CD4-positive, alpha-beta memory T cell (primary cell): ENCODE measurements at regions of chr1 and their contacts with region 1.

Region 1: GRCh38 chr1:172398970-172399755 is 21.3 kb upstream of the C1orf105 start:
- DNase-seq: peak in 4 of 5 donors; percentile 43 to 55 (median 49)
- H3K4me3 ChIP-seq: peak overlapping the region in 1 of 2 donors; percentile 20
- H3K4me3 Mint-ChIP-seq: peak overlapping the region; percentile 21 to 80 (median 70)
- H3K27ac ChIP-seq: no peak overlapping the region
- H3K27ac Mint-ChIP-seq: peak overlapping the region; percentile 64 to 82 (median 77)
- H3K4me1 ChIP-seq: peaks cover 44% of the 10 kb centered on the region
- H3K4me1 Mint-ChIP-seq: peaks cover 32 to 68% (median 53%) of the 10 kb centered on the region in 4 donors
- H3K27me3 ChIP-seq: no peaks in the 10 kb centered on the region
- H3K27me3 Mint-ChIP-seq: no peaks in the 10 kb centered on the region

Region 2: GRCh38 chr1:171801487-171801891 is 597.7 kb before region 1 on chr1:
- CTCF ChIA-PET with region 1: interaction called, 4 read pairs
- POLR2A ChIA-PET with region 1: no interaction called
- intact Hi-C with region 1: loop called (anchors 1 kb)
- DNase-seq: peak in 2 of 5 donors; percentile 20 to 23
- H3K4me3 ChIP-seq: no peak overlapping the region
- H3K4me3 Mint-ChIP-seq: no peak overlapping the region
- H3K27ac ChIP-seq: no peak overlapping the region
- H3K27ac Mint-ChIP-seq: peak overlapping the region in 1 of 7 donors; percentile 7
- H3K4me1 ChIP-seq: no peaks in the 10 kb centered on the region
- H3K4me1 Mint-ChIP-seq: peaks cover 3 to 8% (median 6%) of the 10 kb centered on the region in 4 donors
- H3K27me3 ChIP-seq: no peaks in the 10 kb centered on the region
- H3K27me3 Mint-ChIP-seq: no peaks in the 10 kb centered on the region

Region 3: GRCh38 chr1:172089768-172090510 is 309.2 kb before region 1 on chr1:
- CTCF ChIA-PET with region 1: interaction called, 57 read pairs
- POLR2A ChIA-PET with region 1: interaction called, 3 read pairs
- intact Hi-C with region 1: loop called (anchors 1 kb)
- DNase-seq: peak; percentile 42 to 57 (median 49)
- H3K4me3 ChIP-seq: no peak overlapping the region
- H3K4me3 Mint-ChIP-seq: peak overlapping the region in 1 of 8 donors; percentile 18
- H3K27ac ChIP-seq: no peak overlapping the region
- H3K27ac Mint-ChIP-seq: peak overlapping the region in 1 of 7 donors; percentile 73
- H3K4me1 ChIP-seq: no peaks in the 10 kb centered on the region
- H3K4me1 Mint-ChIP-seq: peaks cover 3 to 6% (median 4%) of the 10 kb centered on the region in 4 donors
- H3K27me3 ChIP-seq: no peaks in the 10 kb centered on the region
- H3K27me3 Mint-ChIP-seq: peaks cover 0 to 2% of the 10 kb centered on the region in 2 donors

Region 4: GRCh38 chr1:172180501-172181285 is 218.5 kb before region 1 on chr1:
- CTCF ChIA-PET with region 1: interaction called, 15 read pairs
- POLR2A ChIA-PET with region 1: interaction called, 32 read pairs
- intact Hi-C with region 1: loop called (anchors 1 kb)
- DNase-seq: peak; percentile 46 to 58 (median 55)
- H3K4me3 ChIP-seq: peak overlapping the region; percentile 23 to 36
- H3K4me3 Mint-ChIP-seq: peak overlapping the region; percentile 75 to 92 (median 86)
- H3K27ac ChIP-seq: peak overlapping the region; percentile 75
- H3K27ac Mint-ChIP-seq: peak overlapping the region; percentile 94 to 99 (median 97)
- H3K4me1 ChIP-seq: peaks cover 44% of the 10 kb centered on the region
- H3K4me1 Mint-ChIP-seq: peaks cover 25 to 61% (median 48%) of the 10 kb centered on the region in 4 donors
- H3K27me3 ChIP-seq: no peaks in the 10 kb centered on the region
- H3K27me3 Mint-ChIP-seq: no peaks in the 10 kb centered on the region

Region 5: DNA sequence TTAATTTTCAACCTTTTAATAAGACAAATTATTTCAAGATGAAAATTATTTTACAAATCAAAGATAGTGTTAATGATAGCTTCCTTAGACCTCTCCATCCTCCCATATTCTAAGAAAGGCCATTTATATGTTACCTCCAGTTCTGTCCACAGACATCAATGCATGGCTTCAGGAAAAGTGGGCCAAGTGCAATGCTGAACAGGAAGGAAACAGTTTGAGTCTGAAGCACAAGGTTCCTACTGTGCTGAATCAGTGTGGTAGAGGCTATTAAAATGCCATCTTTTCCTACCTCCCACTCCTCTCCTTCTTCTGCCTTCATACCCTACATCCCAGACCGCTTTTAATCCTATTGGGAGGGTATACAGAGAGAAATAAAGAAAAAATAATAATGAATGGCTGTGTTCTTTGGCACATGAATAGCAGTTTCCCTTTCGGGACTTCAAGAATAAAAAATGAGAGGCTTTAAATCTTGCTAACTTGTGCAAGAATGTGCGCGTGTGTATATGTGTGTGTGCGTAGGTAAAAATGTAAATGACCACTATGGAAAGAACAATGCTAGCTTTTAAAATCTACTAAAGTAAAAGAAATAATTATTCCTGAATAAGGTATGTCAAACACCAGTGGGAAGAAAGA is 41.3 kb before region 1 on chr1:
- CTCF ChIA-PET with region 1: interaction called, 26 read pairs
- POLR2A ChIA-PET with region 1: interaction called, 61 read pairs
- intact Hi-C with region 1: loop called (anchors 1 kb)
- DNase-seq: no peak
- H3K4me3 ChIP-seq: no peak overlapping the region
- H3K4me3 Mint-ChIP-seq: peak overlapping the region; percentile 62 to 84 (median 74)
- H3K27ac ChIP-seq: peak overlapping the region; percentile 56
- H3K27ac Mint-ChIP-seq: peak overlapping the region in 6 of 7 donors; percentile 73 to 95 (median 90)
- H3K4me1 ChIP-seq: peaks cover 66% of the 10 kb centered on the region
- H3K4me1 Mint-ChIP-seq: peaks cover 22 to 58% (median 46%) of the 10 kb centered on the region in 4 donors
- H3K27me3 ChIP-seq: no peaks in the 10 kb centered on the region
- H3K27me3 Mint-ChIP-seq: no peaks in the 10 kb centered on the region

Region 6: DNA sequence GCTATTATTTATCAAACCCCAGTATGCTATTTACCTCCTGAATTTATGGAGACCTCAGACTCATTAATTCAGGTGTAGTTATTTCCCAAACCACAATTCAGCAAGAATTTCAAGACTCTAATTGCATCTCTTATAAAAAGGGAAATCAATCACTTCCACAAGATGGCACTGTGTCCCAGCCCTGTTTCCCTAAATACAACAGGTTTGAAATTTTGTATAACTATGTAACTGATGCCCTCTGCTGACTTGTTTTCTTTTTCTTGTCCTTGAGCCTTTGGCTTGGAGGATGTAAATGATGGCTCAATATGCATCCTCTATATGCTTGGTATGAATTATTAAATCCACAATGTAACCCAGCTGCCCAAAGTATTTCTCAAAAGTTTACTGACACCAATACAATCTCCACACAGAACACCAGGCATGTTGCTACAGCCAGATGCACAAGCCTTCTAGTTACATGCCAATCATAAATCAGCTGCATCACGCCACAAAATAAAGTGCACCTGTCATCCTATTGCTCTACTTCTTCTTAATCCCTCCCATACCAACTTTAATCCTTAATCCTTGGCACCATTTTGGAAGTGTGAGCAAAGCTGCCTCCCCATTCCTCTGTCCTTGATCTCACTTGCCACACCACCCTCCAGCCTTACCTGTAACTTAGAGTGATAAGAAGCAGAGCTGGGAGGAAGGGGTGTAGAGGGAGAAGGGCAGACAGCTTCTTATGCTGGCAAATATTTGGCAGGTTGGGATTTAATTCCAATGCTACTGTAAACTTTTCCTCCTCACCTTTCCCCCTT is 30.4 kb after region 1 on chr1:
- CTCF ChIA-PET with region 1: interaction called, 8 read pairs
- POLR2A ChIA-PET with region 1: interaction called, 7 read pairs
- intact Hi-C with region 1: loop called (anchors 1 kb)
- DNase-seq: peak; percentile 49 to 63 (median 56)
- H3K4me3 ChIP-seq: no peak overlapping the region
- H3K4me3 Mint-ChIP-seq: peak overlapping the region in 2 of 8 donors; percentile 26 to 39
- H3K27ac ChIP-seq: no peak overlapping the region
- H3K27ac Mint-ChIP-seq: peak overlapping the region in 6 of 7 donors; percentile 5 to 72 (median 56)
- H3K4me1 ChIP-seq: peaks cover 59% of the 10 kb centered on the region
- H3K4me1 Mint-ChIP-seq: peaks cover 31 to 49% (median 41%) of the 10 kb centered on the region in 4 donors
- H3K27me3 ChIP-seq: no peaks in the 10 kb centered on the region
- H3K27me3 Mint-ChIP-seq: no peaks in the 10 kb centered on the region